Activated naive CD4-positive, alpha-beta T cell treated with anti-CD3 and anti-CD28 coated beads for 36 hours (primary cell): ENCODE measurements at regions of chr12 and their contacts with region 1.

Region 1: DNA sequence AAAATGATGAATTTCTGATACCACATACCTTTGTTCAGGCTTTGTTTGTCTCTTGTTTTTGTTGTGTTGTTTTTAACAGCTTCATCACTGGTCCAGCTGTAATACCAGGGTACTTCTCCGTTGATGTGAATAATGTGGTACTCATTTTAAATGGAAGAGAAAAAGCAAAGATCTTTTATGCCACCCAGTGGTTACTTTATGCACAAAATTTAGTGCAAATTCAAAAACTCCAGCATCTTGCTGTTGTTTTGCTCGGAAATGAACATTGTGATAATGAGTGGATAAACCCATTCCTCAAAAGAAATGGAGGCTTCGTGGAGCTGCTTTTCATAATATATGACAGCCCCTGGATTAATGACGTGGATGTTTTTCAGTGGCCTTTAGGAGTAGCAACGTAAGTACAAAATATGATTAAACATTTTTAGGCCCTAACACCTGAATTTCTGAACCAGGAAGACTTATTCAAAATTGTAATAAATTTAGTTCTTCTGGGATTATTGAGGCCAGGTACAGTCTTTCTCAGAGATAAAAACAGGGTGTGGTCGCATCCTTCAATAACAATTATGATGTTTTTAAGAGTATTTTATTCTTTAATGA is 22.4 kb downstream of the RXYLT1 start:
- DNase-seq: no peak
- H3K4me3 Mint-ChIP-seq: no peak overlapping the region
- H3K27ac Mint-ChIP-seq: no peak overlapping the region
- H3K4me1 Mint-ChIP-seq: peaks cover 2% of the 10 kb centered on the region
- H3K27me3 Mint-ChIP-seq: no peaks in the 10 kb centered on the region

Region 2: GRCh38 chr12:62834971-62835547 is 967.1 kb before region 1 on chr12:
- CTCF ChIA-PET with region 1: no interaction called
- intact Hi-C with region 1: no loop called
- DNase-seq: no peak
- H3K4me3 Mint-ChIP-seq: no peak overlapping the region
- H3K27ac Mint-ChIP-seq: no peak overlapping the region
- H3K4me1 Mint-ChIP-seq: no peaks in the 10 kb centered on the region
- H3K27me3 Mint-ChIP-seq: peaks cover 9% of the 10 kb centered on the region

Region 3: GRCh38 chr12:63151623-63152320 is 650.3 kb before region 1 on chr12:
- CTCF ChIA-PET with region 1: interaction called, 4 read pairs
- intact Hi-C with region 1: loop called (anchors 5 kb)
- DNase-seq: peak; percentile 31
- H3K4me3 Mint-ChIP-seq: peak overlapping the region; percentile 3
- H3K27ac Mint-ChIP-seq: no peak overlapping the region
- H3K4me1 Mint-ChIP-seq: peaks cover 15% of the 10 kb centered on the region
- H3K27me3 Mint-ChIP-seq: peaks cover 48% of the 10 kb centered on the region

Region 4: DNA sequence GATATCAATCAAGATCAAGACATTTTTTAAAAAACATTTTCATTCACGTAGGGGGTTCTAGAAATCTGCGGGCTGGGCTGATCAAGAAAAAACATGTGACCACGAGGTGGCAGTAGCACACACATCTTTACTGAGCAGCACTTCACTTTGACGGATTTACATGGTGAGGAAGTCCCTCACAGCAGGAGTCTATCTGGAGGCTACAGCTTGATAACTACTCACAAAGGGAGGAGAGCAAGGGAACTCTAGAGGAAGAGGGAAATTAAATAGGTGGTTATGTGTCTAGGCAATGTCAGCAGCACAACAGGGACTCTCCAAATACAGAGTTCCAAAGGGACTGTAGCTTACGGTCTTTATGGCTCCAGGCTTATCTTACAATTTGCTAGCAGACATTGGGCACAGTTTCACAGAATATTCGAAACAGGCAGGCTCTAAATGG is 381.9 kb before region 1 on chr12:
- CTCF ChIA-PET with region 1: no interaction called
- intact Hi-C with region 1: loop called (anchors 1 kb)
- DNase-seq: peak; percentile 45
- H3K4me3 Mint-ChIP-seq: no peak overlapping the region
- H3K27ac Mint-ChIP-seq: no peak overlapping the region
- H3K4me1 Mint-ChIP-seq: no peaks in the 10 kb centered on the region
- H3K27me3 Mint-ChIP-seq: no peaks in the 10 kb centered on the region

Region 5: DNA sequence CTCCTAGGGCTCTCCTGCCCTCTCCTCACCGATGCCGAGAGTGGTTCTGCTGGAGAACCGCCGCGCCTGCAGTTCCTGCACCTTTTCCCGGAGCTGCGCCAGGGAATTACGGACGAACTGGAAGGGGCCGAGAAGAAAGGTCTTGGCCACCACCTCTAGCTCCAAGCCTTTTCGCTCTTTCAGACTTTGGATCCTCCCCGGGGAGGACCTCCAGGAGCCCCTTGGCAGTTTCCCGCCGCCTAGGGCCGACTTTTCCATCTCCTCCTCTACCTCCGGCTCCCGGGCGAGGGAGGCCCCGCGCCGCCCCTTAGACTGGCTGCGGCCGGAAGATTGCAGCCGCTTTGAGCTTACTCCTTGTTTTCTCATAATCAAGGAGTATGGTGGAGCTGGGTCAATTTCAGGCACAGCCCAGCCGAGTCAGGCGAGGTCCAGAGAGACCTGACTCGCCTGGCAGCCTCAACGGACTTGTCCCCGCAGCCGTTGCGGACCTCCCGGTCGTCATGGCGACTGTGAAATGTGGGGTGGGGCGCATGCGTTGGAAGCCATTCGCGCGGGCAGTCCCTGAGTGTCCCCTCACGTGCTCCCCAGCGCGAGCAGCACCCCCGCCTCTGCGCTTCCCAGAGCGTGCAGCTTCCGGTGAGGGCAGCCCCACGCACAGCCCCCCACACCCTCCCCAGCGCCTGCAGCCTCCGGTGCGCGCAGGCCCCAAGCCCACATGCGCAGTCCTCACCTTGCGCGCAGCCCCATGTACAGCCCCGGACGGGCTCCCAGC is 133.9 kb before region 1 on chr12 and contains the start of gene DPY19L2:
- CTCF ChIA-PET with region 1: no interaction called
- intact Hi-C with region 1: loop called (anchors 1 kb)
- DNase-seq: peak; percentile 69
- H3K4me3 Mint-ChIP-seq: peak within 1 kb of the TSS; percentile 79
- H3K27ac Mint-ChIP-seq: peak within 1 kb of the TSS; percentile 36
- H3K4me1 Mint-ChIP-seq: peaks cover 10% of the 10 kb centered on the region
- H3K27me3 Mint-ChIP-seq: peaks cover 29% of the 10 kb centered on the region
- total RNA-seq, gene DPY19L2: 0.91 to 1.1 TPM

Region 6: DNA sequence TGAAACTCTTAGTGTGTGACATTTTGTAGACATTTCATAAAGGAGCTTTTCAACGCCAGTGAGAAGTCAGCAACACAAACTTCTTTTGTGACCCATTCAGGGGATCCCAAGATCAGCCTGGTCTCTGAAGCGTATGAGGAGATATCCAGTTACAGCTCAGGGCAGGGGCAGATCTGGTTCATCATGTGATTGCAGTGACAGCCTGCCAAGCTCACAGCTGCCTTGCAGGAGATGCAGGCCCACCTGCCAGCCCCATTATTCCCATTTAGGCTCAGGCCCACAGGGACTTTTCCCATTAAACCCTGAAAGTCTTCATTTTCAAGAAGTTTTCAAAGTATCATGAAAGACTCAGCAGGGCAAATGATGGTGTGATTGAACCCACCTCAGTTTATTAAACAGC is 80.7 kb after region 1 on chr12:
- CTCF ChIA-PET with region 1: no interaction called
- intact Hi-C with region 1: no loop called
- DNase-seq: no peak
- H3K4me3 Mint-ChIP-seq: no peak overlapping the region
- H3K27ac Mint-ChIP-seq: no peak overlapping the region
- H3K4me1 Mint-ChIP-seq: no peaks in the 10 kb centered on the region
- H3K27me3 Mint-ChIP-seq: peaks cover 2% of the 10 kb centered on the region

Region 7: DNA sequence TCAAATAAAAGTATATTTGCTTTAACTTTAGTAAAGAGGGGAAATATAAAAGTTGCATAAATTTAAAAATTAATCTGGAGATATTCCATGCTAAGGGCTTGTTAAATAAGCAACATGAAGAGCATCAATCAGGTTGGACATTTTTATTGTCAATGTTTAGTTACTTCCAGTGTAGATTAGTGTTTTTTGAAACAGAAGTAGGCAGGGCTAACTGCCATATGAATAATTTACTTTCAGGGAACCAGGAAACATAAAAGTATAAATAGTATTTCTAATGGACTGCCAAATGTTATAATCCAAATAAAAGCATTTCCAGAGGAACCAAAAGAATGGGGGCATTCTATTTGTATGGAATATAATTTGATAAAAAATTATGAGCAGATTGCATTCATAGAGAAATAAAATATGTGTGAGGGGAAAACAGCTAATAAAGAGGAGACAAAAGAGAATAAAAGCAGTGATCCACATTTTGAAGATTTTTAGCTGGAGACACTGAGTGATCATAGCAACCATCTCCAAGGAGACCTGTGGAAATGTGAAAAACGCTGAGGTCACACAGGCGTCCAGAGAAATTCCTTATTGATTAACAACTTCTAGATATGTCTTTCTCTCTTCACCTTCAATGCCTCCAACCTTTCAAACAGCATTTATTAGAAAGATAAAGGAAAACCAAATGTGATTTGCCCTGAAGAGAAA is 113.1 kb after region 1 on chr12:
- CTCF ChIA-PET with region 1: no interaction called
- intact Hi-C with region 1: no loop called
- DNase-seq: no peak
- H3K4me3 Mint-ChIP-seq: no peak overlapping the region
- H3K27ac Mint-ChIP-seq: no peak overlapping the region
- H3K4me1 Mint-ChIP-seq: no peaks in the 10 kb centered on the region
- H3K27me3 Mint-ChIP-seq: peaks cover 2% of the 10 kb centered on the region